ENCODE measurements at regions of chr3 and their contacts with region 1.

Region 1: GRCh38 chr3:86234506-86235254 is 756.3 kb downstream of the VGLL3 start:
- DNase-seq: no peak
- ATAC-seq: no peak
- H3K4me3 ChIP-seq: no peak overlapping the region
- H3K27ac ChIP-seq: no peak overlapping the region
- H3K4me1 ChIP-seq: no peaks in the 10 kb centered on the region
- H3K27me3 ChIP-seq: no peaks in the 10 kb centered on the region
- CTCF ChIP-seq: no peak
- POLR2A ChIP-seq: no peak
- RAD21 ChIP-seq: no peak

Region 2: DNA sequence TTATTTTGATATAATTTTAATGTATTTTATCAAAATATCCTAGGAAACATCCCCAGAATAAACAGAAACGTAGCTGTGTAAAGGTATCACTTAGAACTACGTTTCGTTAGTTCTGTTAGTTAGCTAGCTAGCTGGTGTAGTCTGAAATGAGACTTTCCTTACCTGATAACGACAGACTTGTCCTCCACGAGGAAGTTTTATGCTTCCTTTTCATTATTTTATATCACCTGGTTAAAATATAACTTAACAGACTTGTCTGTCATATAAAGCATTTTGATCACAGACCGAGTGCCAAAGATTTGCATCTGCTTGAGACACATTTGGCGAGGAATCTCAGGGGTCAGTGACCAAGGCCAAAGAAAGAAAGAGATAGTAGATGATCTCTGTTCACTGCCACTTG is 73.2 kb before region 1 on chr3:
- CTCF ChIA-PET with region 1: no interaction called
- POLR2A ChIA-PET with region 1: no interaction called
- RAD21 ChIA-PET with region 1: no interaction called
- intact Hi-C with region 1: loop called (anchors 5 kb)
- DNase-seq: no peak
- ATAC-seq: no peak
- H3K4me3 ChIP-seq: no peak overlapping the region
- H3K27ac ChIP-seq: no peak overlapping the region
- H3K4me1 ChIP-seq: no peaks in the 10 kb centered on the region
- H3K27me3 ChIP-seq: no peaks in the 10 kb centered on the region
- CTCF ChIP-seq: no peak
- POLR2A ChIP-seq: no peak
- RAD21 ChIP-seq: no peak

Measured in HCT116 (cell line).